ENCODE measurements at regions of chr10 and their contacts with region 1.

Region 1: GRCh38 chr10:71212318-71213126 is at the start of gene UNC5B:
- DNase-seq: peak; percentile 76
- ATAC-seq: peak; percentile 86
- H3K4me3 ChIP-seq: peak within 1 kb of the TSS; percentile 84 to 91
- H3K27ac ChIP-seq: peak within 1 kb of the TSS; percentile 82
- H3K4me1 ChIP-seq: peaks cover 32 to 58% of the 10 kb centered on the region in 2 experiments
- H3K27me3 ChIP-seq: peaks cover 27% of the 10 kb centered on the region; the same call in 1 of the 2 replicates
- CTCF ChIP-seq: 0 out of 6 replicates have a peak, but pooled peaks of 1 of the 3 experiments have one; percentile 9
- POLR2A ChIP-seq: peak; percentile 81
- RAD21 ChIP-seq: no peak
- total RNA-seq, gene UNC5B: 22.0 TPM

Region 2: GRCh38 chr10:70925377-70926225 is 286.9 kb before region 1 on chr10:
- CTCF ChIA-PET with region 1: interaction called, 3 read pairs
- POLR2A ChIA-PET with region 1: interaction called, 4 read pairs
- RAD21 ChIA-PET with region 1: interaction called in 1 of 2 experiments, 6 read pairs
- intact Hi-C with region 1: loop called (anchors 1 kb)
- DNase-seq: no peak
- ATAC-seq: peak; percentile 83
- H3K4me3 ChIP-seq: no peak overlapping the region
- H3K27ac ChIP-seq: no peak overlapping the region
- H3K4me1 ChIP-seq: peaks cover 31 to 35% of the 10 kb centered on the region in 2 experiments
- H3K27me3 ChIP-seq: no peaks in the 10 kb centered on the region
- CTCF ChIP-seq: peak; percentile 89 to 95 (median 91)
- POLR2A ChIP-seq: no peak
- RAD21 ChIP-seq: peak; percentile 92

Region 3: GRCh38 chr10:71015674-71016073 is 196.8 kb before region 1 on chr10:
- CTCF ChIA-PET with region 1: no interaction called
- POLR2A ChIA-PET with region 1: no interaction called
- RAD21 ChIA-PET with region 1: no interaction called
- intact Hi-C with region 1: loop called (anchors 5 kb)
- DNase-seq: no peak
- ATAC-seq: no peak
- H3K4me3 ChIP-seq: no peak overlapping the region
- H3K27ac ChIP-seq: no peak overlapping the region
- H3K4me1 ChIP-seq: no peaks in the 10 kb centered on the region
- H3K27me3 ChIP-seq: peaks cover 5% of the 10 kb centered on the region; the same call in 1 of the 2 replicates
- CTCF ChIP-seq: no peak
- POLR2A ChIP-seq: no peak
- RAD21 ChIP-seq: no peak

Region 4: GRCh38 chr10:71033396-71033980 is 179.0 kb before region 1 on chr10:
- CTCF ChIA-PET with region 1: no interaction called
- POLR2A ChIA-PET with region 1: no interaction called
- RAD21 ChIA-PET with region 1: no interaction called
- intact Hi-C with region 1: no loop called
- DNase-seq: no peak
- ATAC-seq: no peak
- H3K4me3 ChIP-seq: no peak overlapping the region
- H3K27ac ChIP-seq: no peak overlapping the region
- H3K4me1 ChIP-seq: no peaks in the 10 kb centered on the region
- H3K27me3 ChIP-seq: peaks cover 11% of the 10 kb centered on the region; the same call in 1 of the 2 replicates
- CTCF ChIP-seq: peak in 2 of 3 experiments; percentile 23 to 27; a peak in 4 of 6 replicates
- POLR2A ChIP-seq: no peak
- RAD21 ChIP-seq: no peak

Region 5: DNA sequence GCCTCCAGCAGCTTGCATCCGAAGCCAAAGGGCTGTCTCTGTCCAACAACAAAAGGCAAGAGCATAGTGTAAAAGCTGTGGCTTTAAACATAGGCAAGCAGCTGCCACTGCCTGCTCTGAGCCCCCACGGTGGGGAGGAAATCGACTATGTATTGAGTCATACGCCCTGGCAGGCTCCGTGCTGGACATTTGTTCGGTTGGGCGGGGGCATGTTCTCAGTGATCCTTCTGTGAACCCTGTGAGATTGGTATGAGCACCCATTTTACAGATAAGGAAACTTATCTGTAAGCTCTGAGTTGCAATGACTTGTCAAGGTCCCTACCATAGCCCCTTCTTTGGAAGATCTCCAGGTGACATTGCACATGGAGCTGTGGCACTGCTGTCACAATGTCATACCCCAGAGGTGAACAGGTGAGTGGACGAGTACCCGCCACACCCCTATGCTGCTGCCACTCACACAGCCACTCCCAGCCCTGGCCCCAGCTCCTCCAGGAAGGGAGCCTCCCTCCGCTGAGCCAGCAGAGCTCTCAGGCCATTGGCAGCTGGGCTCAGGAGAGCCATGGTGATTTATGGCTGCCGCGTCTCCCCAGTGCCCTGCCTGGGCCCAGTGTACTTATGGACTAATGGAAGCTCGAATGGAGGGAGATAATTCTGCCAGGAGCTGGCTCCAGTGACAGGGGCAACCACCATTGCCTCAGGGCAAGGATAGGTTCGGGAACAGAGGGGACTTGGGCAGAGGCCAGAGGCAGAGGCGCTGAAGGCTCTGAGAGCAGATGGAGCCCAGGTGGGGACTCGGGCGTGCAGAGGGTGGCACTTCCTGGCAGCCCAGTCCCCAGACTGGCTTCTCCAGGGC is 43.5 kb after region 1 on chr10:
- CTCF ChIA-PET with region 1: interaction called, 5 read pairs
- POLR2A ChIA-PET with region 1: interaction called, 4 read pairs
- RAD21 ChIA-PET with region 1: interaction called in 1 of 2 experiments, 4 read pairs
- intact Hi-C with region 1: loop called (anchors 2 kb)
- DNase-seq: peak; percentile 56
- ATAC-seq: peak; percentile 87
- H3K4me3 ChIP-seq: peak overlapping the region; percentile 31 to 43
- H3K27ac ChIP-seq: peak overlapping the region; percentile 38
- H3K4me1 ChIP-seq: peaks cover 56 to 74% of the 10 kb centered on the region in 2 experiments
- H3K27me3 ChIP-seq: no peaks in the 10 kb centered on the region
- CTCF ChIP-seq: no peak
- POLR2A ChIP-seq: no peak
- RAD21 ChIP-seq: no peak

Region 6: DNA sequence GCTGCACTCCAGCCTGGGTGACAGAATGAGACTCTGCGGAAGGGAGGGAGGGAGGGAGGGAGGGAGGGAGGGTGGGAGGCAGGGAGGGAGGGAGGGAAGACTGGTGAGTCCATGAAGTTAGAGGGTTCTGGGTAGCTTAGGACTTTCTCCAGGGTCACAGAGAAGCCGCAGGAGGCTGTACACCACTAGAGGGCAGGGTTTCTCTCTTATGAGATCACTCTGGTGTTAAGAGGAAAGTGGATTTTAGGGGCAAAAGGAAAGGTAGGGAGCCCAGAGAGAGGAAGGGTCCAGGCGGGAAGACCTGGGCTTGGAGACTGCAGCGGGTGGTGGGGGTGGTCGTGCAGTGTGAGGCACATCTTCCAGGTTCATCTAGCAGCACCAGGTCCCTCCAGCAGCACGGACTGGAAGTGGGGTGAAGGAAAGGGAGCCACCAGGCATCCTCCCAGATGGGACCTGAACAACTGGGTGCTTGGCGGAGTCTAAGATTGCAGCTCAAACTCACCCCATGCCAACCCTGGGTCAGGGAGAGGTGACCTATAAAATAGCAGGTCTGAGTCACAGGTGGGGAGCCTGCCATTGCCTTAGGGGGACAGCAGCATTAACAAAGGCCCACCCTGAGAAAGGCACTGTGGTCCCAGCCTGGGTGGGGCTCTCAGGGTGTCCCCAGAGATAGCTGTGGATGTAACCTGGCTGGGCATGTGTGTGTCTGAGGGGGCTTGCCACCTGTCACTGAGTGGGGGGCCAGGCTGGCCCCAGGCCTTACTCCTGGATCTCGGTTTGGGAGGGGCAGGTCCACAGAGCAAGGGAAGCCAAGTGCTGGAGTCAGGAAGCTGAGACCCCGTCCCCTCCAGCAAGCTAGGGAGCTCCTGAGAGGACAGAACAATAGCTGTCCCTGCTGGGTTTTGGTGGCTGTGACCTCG is 58.0 kb after region 1 on chr10:
- CTCF ChIA-PET with region 1: interaction called, 7 read pairs
- POLR2A ChIA-PET with region 1: interaction called, 4 read pairs
- RAD21 ChIA-PET with region 1: no interaction called
- intact Hi-C with region 1: loop called (anchors 2 kb)
- DNase-seq: peak; percentile 68
- ATAC-seq: peak; percentile 91
- H3K4me3 ChIP-seq: no peak overlapping the region
- H3K27ac ChIP-seq: no peak overlapping the region
- H3K4me1 ChIP-seq: peaks cover 24 to 34% of the 10 kb centered on the region in 2 experiments; a peak in 3 of 4 replicates
- H3K27me3 ChIP-seq: no peaks in the 10 kb centered on the region
- CTCF ChIP-seq: peak; percentile 32 to 85 (median 65); a peak in 5 of 6 replicates
- POLR2A ChIP-seq: no peak
- RAD21 ChIP-seq: peak; percentile 57

Region 7: DNA sequence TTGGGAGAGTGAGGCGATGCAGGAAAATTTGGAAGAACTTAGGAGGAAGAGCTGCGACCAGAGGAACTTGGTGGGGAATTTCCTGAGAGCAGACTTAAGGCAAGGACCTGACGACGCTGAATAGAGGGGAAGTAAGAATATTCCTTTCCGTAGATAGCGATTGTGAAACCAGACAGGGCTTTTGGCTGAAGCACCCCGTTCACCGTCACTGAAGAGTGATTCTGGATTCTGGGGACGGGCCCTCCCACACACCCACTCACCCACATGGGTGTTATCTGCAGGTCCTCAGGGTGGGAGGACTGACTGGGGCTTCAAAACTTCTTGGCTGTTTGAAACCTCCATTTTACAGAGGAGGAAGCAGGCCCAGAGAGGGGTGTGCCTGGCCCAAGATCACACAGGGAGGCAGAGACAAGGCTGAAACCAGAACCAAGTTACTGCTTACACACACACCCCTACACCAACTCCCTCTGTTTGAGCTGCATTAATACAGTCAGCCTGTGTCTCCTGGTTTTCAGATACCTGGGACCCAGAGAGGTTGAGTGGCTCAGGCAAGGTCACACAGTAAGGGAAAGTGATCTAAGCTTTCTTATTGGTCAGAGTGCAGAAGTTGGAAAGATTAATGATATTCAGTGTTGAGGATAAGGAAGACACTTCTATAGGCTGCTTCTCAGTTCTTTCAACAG is 147.0 kb after region 1 on chr10:
- CTCF ChIA-PET with region 1: no interaction called
- POLR2A ChIA-PET with region 1: no interaction called
- RAD21 ChIA-PET with region 1: no interaction called
- intact Hi-C with region 1: no loop called
- DNase-seq: no peak
- ATAC-seq: no peak
- H3K4me3 ChIP-seq: no peak overlapping the region
- H3K27ac ChIP-seq: no peak overlapping the region
- H3K4me1 ChIP-seq: peaks cover 7 to 8% of the 10 kb centered on the region in 2 experiments
- H3K27me3 ChIP-seq: no peaks in the 10 kb centered on the region
- CTCF ChIP-seq: no peak
- POLR2A ChIP-seq: no peak
- RAD21 ChIP-seq: no peak

Measured in HCT116 (cell line).